BJ (cell line): ENCODE measurements at regions of chr12 and their contacts with region 1.

Region 1: DNA sequence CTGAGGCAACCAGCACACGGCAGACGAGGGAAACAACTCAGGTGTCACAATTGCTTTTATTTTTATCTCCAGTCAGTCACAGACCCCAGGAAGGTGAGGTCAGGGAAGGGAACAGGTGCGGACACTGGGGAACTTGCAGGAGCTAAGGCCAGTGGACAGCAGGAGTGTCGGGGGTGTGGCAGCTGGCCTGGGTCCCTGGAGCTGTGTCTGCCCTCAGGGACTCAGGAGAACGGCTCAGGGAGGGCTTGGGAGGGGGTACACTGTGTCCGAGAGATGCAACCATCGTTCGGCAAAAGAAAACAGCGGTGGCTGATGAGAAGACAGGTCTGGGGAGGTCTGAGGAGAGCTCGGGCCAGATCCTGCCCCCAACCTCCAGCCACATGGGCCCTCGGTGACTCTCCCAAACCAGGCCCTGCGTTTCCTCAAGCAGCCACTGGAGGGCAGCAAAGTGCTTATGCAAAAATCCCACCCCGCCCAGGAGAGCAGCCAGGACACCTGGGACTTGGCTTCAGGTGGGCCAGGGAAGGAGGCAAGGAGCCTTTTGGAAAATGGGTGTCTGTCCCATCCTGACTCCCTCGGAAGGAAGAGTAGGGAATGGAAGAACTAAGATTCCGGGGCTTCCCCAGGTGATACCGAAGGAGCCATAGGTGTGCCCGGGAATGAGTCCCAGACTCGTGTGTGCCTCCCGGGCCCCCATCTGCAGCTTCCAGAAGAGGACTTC is 24.1 kb upstream of the BCDIN3D start:
- DNase-seq: no peak
- H3K4me3 ChIP-seq: no peak overlapping the region
- H3K27me3 ChIP-seq: peaks cover 4% of the 10 kb centered on the region; the same call in 1 of the 2 replicates
- CTCF ChIP-seq: peak; percentile 97

Region 2: GRCh38 chr12:49776413-49776812 is 90.6 kb before region 1 on chr12:
- CTCF ChIA-PET with region 1: interaction called, 24 read pairs
- POLR2A ChIA-PET with region 1: no interaction called
- DNase-seq: no peak
- H3K4me3 ChIP-seq: no peak overlapping the region
- H3K27me3 ChIP-seq: no peaks in the 10 kb centered on the region
- CTCF ChIP-seq: peak; percentile 84

Region 3: DNA sequence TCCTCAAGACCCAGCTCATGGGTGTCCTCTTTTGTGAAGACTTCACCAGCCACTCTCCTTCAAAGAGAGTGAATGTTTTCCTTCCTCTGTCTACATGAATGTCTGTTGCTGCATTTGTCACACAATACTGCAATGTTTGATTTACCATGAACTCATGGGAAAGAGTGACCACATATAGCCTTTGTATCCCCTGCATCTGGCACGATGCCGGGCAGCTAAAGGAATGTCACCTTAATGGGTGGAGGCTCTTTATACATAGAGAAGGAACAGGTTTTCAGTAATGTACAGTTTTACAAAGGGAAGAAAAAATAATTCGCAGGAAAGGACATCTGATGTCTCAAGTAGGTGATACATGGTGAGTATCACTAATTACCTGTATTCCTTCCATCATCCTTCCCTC is 12.0 kb before region 1 on chr12:
- CTCF ChIA-PET with region 1: interaction called, 11 read pairs
- POLR2A ChIA-PET with region 1: no interaction called
- DNase-seq: no peak
- H3K4me3 ChIP-seq: no peak overlapping the region
- H3K27me3 ChIP-seq: peaks cover 9% of the 10 kb centered on the region; the same call in 1 of the 2 replicates
- CTCF ChIP-seq: no peak

Region 4: GRCh38 chr12:49912345-49913255 is 45.6 kb after region 1 on chr12:
- CTCF ChIA-PET with region 1: interaction called, 11 read pairs
- POLR2A ChIA-PET with region 1: no interaction called
- DNase-seq: no peak
- H3K4me3 ChIP-seq: no peak overlapping the region
- H3K27me3 ChIP-seq: no peaks in the 10 kb centered on the region; the same call in 1 of the 2 replicates
- CTCF ChIP-seq: no peak

Region 5: DNA sequence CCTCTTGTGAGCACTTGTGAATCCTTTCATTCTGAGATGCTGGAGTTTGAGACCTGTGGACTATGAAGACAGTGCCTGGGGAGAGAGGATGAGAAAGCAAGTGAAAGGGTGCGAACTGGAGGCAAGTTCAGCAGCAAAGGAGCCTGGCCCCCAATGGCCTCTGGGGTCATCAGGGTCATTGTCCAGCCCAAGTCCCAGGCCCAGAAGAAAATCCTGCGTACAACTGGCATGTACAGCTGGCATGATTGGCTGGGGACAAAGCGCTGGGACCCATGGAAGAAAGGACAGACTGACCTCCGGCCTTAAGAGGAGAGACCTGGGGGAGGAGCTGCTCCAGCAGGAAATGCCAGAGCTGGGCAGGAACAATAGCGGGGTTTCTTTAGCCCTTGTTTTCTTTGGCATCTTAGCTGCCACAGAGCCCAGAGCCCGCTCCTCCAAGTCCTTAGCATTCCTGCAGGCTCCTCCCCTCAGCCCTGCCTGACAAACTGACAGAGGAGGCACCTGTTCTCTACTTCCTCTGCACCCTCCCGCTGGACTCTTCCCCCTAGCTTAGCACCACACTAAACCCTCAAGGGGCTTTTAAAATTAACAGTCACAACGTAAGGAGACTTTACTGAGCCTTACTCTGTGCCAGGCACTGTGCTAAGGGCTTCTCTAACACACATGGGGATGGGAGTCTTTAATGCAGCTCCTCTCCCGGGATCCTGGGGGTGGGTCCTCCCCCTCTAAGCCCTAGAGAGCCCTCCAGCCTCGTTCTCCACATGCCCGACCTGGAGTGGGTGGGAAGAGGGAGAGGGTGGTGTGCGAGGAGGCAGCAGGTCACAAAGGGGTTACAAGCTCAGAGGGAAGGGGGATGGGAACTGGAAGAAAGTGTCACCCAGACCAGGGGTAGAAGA is 92.8 kb after region 1 on chr12:
- CTCF ChIA-PET with region 1: interaction called, 91 read pairs
- POLR2A ChIA-PET with region 1: no interaction called
- DNase-seq: no peak
- H3K4me3 ChIP-seq: no peak overlapping the region
- H3K27me3 ChIP-seq: peaks cover 54% of the 10 kb centered on the region
- CTCF ChIP-seq: no peak

Region 6: DNA sequence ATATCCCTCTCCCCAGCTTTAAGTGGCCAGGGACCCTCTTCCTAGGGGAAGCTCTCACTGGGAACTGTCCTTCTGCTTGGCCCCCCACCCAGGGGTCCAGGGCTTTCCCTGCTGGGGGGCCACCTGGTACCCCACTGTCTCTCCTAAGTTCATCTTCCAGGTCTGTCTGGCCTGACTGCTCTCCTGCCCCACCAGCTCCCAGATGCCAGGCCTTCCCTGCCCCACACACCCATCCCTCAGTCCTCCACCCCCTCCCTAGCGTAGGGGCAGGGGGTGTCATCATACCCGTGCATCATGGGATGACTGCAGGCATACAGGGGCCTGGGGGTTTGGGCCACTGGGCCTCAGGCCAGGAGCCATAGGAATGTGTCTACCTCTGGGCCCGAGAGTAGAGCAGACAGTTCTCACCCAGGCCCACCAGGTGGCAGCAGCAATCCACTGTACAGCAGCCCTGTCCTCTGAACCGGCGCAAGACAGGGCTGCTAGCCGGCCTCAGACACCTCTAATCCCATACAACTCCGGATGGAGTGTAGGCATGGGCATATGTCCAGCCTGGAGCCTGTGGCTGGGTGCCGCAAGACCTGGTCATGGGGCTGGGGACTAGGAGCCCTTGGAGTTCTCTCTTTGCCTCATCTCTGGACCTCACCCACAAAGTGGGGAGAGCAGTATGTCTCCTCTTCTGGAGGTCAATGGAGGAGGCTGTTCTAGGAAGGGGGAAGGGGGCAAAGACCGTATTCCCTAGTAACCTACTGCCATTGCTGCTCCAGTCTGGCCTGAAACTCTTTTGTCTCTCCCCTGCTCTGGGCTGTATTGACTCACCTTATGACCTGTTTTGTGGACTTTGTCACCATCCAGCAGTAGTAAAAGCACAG is 208.2 kb after region 1 on chr12:
- CTCF ChIA-PET with region 1: interaction called, 22 read pairs
- POLR2A ChIA-PET with region 1: no interaction called
- DNase-seq: no peak
- H3K4me3 ChIP-seq: no peak overlapping the region
- H3K27me3 ChIP-seq: no peaks in the 10 kb centered on the region
- CTCF ChIP-seq: peak; percentile 91

Region 7: DNA sequence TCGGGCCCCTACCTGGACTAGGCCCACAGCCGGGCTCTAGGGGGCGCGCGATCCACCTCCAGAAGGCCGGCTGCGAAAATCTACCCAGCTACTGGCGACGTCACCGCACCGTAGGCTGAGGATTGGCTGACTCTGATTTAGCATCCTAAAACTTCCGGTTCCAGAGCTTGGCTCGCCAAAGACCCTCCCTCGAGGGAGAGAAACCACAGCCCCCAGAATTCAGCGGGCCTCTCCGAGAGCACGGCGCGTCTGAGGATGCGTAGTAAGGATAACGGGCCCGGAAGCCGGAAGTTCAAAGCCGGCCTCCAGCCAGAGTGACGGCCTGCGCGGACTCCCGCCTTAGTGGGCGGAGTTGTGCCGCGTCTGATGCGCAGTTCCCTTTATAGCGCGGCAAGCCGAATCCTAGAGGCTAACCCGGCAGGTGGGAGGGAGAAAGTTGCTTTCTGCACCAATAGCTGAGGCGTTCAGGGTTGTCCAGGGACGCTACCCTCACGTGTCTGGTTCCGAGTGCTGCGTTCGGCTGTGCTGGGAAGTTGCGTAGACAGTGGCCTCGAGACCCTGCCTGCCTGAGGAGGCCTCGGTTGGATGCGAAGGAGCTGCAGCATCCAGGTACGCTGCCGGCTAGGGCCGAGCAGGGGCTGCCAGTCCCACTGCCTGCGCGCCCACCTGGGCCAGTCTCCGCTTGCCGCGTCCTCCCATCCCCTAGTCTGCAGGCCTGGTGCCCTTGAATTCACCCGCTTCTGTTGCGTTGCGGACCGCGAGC is 244.9 kb after region 1 on chr12 and contains the start of gene COX14:
- CTCF ChIA-PET with region 1: no interaction called
- POLR2A ChIA-PET with region 1: no interaction called
- DNase-seq: peak; percentile 98
- H3K4me3 ChIP-seq: peak within 1 kb of the TSS; percentile 100
- H3K27me3 ChIP-seq: no peaks in the 10 kb centered on the region
- CTCF ChIP-seq: peak; percentile 98
- polyA plus RNA-seq, gene COX14: 85.7 and 104 TPM in 2 replicates